ENCODE measurements at regions of chr3 and their contacts with region 1.

Region 1: GRCh38 chr3:18812316-18812715 is 336.0 kb upstream of the KCNH8 start:
- DNase-seq: peak in 1 of 2 experiments; percentile 51
- H3K4me3 ChIP-seq: no peak overlapping the region
- H3K27ac ChIP-seq: no peak overlapping the region
- H3K4me1 ChIP-seq: peaks cover 20% of the 10 kb centered on the region
- H3K27me3 ChIP-seq: no peaks in the 10 kb centered on the region
- CTCF ChIP-seq: no peak

Region 2: DNA sequence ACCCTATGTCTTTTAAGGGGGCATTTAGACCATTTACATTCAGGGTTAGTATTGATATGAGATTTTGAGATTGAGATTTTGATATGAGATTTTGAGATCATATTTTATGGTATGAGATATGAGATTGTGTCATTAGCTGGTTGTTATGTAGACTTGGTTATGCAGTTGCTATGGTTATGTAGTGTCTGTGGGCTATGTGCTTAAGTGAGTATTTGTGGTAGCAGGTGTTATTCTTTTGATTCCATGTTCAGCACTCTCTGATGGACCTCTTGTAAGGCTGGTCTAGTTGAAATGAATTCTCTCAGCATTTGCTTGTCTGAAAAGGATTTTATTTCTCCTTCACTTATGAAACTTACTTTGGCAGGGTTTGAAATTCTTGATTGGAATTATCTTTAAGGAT is 612.6 kb before region 1 on chr3:
- CTCF ChIA-PET with region 1: no interaction called
- POLR2A ChIA-PET with region 1: no interaction called
- intact Hi-C with region 1: no loop called
- DNase-seq: no peak
- H3K4me3 ChIP-seq: no peak overlapping the region
- H3K27ac ChIP-seq: no peak overlapping the region
- H3K4me1 ChIP-seq: no peaks in the 10 kb centered on the region
- H3K27me3 ChIP-seq: no peaks in the 10 kb centered on the region
- CTCF ChIP-seq: no peak

Region 3: DNA sequence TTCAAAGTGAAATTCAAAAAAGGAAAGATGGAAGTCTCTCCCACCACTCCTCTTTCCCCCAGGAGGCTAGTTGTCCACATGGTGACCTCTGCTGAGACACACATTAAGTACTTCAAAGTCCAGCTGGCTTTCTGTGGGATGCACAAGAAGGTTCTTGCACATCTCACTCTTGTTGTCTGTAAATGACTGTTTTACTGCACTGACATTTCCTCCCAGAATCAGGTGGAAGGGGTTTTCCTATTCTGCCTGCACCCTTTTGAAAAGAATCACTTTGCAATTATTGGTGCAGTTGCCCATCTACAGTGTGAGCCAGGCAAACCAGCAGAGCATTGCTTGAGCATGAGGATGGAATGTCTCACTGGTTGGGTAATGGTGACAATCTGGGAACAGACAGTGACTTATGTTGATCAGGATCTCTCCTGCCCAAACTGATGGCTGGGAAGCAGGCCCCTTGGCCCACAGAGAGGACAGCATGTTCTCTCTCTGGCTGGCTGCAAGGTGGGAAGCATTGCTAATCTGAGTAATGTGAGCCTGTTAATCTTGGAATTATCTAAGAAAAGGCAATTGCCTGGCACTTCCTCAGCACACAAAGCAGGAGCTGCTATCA is 39.5 kb before region 1 on chr3:
- CTCF ChIA-PET with region 1: no interaction called
- POLR2A ChIA-PET with region 1: no interaction called
- intact Hi-C with region 1: no loop called
- DNase-seq: no peak
- H3K4me3 ChIP-seq: no peak overlapping the region
- H3K27ac ChIP-seq: no peak overlapping the region
- H3K4me1 ChIP-seq: no peaks in the 10 kb centered on the region
- H3K27me3 ChIP-seq: no peaks in the 10 kb centered on the region
- CTCF ChIP-seq: no peak

Region 4: DNA sequence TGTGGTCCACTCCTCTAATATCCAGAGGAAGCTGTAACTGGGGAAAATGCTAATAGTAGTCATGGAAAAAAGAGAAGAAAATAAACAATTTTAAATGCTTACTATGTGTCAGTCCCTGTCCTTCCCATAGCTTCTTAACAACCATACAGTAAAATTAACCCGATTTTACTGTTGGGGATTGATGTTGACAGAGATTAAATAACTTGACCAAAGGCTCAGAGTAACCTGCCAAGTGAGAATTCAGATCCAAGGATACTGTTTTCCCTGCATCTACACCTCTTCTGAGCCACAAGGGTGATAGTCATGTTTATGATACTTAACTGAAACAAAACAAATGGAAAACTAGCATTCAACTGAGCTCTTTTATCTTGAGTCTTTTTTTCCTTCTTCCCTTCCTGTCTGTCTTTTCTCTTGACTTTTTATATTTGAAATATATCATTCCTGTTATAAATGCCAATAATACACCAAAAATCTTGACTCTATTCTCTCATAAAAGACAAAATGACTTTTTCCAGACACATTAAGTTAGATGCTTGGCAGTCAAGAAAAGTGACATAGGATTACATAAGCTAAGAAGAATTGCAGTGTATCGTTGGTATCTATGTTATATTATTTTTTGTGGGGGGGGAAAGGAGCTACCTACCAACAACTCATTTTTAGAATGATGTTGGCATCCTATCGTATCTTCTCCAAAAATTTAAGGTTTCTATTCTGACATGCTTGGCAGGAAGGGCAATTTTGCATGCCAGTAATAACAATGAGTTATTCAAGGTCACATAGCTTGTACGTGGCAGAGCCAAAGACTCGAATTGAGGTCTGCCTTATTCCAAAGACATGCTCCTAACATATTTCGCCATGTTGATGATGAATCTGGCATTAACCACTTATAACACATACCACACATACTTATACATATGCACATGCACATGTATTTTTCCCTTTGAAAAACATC is 29.4 kb after region 1 on chr3:
- CTCF ChIA-PET with region 1: no interaction called
- POLR2A ChIA-PET with region 1: no interaction called
- intact Hi-C with region 1: loop called (anchors 2 kb)
- DNase-seq: no peak
- H3K4me3 ChIP-seq: no peak overlapping the region
- H3K27ac ChIP-seq: no peak overlapping the region
- H3K4me1 ChIP-seq: 0 out of 2 replicates have a peak, but pooled peaks cover 4% of the 10 kb centered on the region
- H3K27me3 ChIP-seq: no peaks in the 10 kb centered on the region
- CTCF ChIP-seq: no peak